ENCODE measurements at regions of chr15 and their contacts with region 1.

Region 1: GRCh38 chr15:74396445-74397238 is 29.2 kb upstream of the CYP11A1 start:
- DNase-seq: no peak
- H3K4me3 Mint-ChIP-seq: peak overlapping the region; percentile 66
- H3K27ac Mint-ChIP-seq: peak overlapping the region; percentile 97
- H3K4me1 Mint-ChIP-seq: peaks cover 90% of the 10 kb centered on the region
- H3K27me3 Mint-ChIP-seq: no peaks in the 10 kb centered on the region

Region 2: GRCh38 chr15:72426753-72427152 is 1969.9 kb before region 1 on chr15:
- intact Hi-C with region 1: no loop called
- DNase-seq: no peak
- H3K4me3 Mint-ChIP-seq: no peak overlapping the region
- H3K27ac Mint-ChIP-seq: no peak overlapping the region
- H3K4me1 Mint-ChIP-seq: no peaks in the 10 kb centered on the region
- H3K27me3 Mint-ChIP-seq: peaks cover 22% of the 10 kb centered on the region

Region 3: DNA sequence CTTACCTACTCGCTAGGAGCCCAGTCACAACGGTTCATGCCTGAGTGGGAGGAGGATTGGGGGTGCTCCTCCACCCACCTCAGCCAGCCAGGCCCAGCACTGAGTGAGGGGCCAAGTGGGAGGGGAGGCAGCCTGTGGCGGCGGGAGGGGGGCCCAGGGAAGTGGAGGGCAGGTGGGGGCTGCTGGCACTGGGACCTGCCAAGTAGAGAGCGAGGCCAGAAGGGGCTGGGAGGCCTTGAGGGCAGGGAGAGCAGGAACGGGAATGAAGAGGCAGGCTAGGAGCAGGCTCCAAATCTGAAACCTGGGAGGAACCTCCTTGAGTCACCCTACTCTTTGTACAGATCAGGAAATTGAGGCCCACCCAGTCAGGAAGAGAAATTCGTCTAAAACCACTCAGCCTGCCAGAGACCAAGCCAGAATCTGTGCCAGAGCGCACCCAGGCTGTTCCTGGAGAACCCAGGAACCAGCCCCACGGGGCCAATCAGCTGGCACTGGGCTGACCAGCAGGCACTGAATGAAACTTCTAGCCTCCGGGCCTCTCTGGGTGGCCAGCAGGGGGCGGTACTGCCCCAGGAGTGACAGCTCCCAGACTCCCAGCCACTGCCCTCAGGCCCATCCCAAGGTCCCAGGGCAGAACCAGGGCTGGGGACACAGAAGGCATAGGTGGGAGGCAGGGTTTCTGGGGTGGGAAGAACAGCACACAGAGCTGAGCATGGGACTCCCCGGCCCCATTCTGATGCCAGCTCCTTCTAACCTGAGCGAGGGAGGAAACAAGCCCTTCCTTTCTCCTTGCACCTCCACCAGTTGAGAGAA is 14.4 kb before region 1 on chr15:
- intact Hi-C with region 1: loop called (anchors 1 kb)
- DNase-seq: peak; percentile 94
- H3K4me3 Mint-ChIP-seq: no peak overlapping the region
- H3K27ac Mint-ChIP-seq: peak overlapping the region; percentile 82
- H3K4me1 Mint-ChIP-seq: peaks cover 76% of the 10 kb centered on the region
- H3K27me3 Mint-ChIP-seq: no peaks in the 10 kb centered on the region

Region 4: DNA sequence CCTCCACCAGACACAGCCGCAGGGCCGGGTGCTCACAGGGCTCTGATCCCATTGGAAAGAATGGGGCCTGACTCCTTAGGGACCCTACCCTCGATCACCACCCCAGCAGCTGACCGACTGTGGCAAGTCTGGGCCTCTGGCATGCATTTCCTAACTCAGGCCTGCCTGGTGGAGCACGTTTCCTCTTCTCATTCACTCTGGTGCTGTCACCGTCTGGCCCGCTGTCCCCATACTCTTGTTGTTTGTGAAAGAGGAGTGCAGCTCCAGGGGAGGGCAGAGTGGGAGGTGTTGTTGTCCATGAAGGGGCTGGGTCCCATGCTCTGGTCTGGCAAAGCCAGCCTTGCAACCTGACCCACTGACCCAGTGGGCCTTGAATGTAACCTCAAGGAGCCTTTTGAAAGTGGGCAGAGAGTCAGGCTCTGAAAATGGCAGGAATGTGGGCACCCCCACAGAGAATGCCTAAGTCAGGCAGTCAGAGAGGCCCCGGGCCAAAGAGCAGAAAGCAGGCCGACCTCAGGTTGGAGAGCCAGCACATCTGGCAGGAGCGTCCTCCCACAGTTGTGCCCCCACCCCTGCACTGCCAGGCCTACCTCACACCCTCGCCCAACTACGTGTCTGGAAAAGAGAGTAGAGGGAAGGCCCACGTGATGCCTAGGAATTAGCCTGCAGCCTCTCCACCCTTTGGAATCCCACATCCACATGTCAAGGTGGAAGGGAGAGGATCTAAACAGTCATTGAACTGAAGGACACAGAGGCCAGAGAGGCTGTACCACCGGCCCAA is 26.2 kb after region 1 on chr15:
- intact Hi-C with region 1: no loop called
- DNase-seq: no peak
- H3K4me3 Mint-ChIP-seq: no peak overlapping the region
- H3K27ac Mint-ChIP-seq: peak overlapping the region; percentile 20
- H3K4me1 Mint-ChIP-seq: peaks cover 50% of the 10 kb centered on the region
- H3K27me3 Mint-ChIP-seq: no peaks in the 10 kb centered on the region

Region 5: DNA sequence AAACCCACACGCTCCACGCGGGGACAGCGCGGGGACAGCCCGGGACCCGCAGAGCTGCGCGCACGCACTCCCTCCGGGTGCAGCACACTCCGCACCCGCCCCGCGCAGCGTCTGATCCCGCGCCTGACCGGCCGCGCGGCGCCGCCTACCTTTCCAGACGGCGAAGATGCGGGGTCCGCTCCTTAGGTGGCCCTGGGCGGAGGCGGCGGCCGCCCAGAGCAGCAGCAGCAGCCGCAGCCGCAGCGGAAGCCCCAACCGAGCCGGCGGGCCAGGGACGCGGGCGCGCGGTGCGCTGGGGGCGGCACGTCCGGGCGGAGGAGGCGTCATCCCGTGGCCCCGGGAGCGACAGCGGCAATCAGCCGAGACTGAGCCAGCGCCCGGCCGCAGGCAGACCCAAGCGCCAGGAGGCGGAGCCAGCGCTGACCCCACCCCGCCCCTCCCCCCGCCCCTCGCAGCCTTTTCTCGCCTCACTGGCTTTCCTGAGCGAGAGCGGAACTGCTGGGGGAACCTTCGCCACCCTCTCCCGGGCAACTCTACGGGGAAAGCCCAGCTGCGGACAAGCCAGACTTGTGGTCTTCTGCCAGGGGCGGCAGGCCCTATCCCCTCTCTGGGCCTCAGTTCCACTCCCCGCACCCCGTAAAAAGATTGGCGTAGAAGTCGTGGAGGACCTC is 37.1 kb after region 1 on chr15 and contains the start of gene SEMA7A:
- intact Hi-C with region 1: loop called (anchors 1 kb)
- DNase-seq: peak; percentile 96
- H3K4me3 Mint-ChIP-seq: peak within 1 kb of the TSS; percentile 95
- H3K27ac Mint-ChIP-seq: peak within 1 kb of the TSS; percentile 86
- H3K4me1 Mint-ChIP-seq: peaks cover 72% of the 10 kb centered on the region
- H3K27me3 Mint-ChIP-seq: no peaks in the 10 kb centered on the region
- total RNA-seq, gene SEMA7A: 88.0 and 89.6 TPM in 2 replicates

Measured in activated CD4-positive, alpha-beta T cell treated with anti-CD3 and anti-CD28 coated beads, Interleukin-2, amount 10 ng/mL, durations not matched to agents 24 days and 14 days (primary cell).